ENCODE measurements at regions of chr11 and their contacts with region 1.

Region 1: GRCh38 chr11:17504330-17505107 is 27.9 kb upstream of the ABCC8 start:
- DNase-seq: peak; percentile 36 to 72 (median 48)
- H3K4me3 ChIP-seq: no peak overlapping the region
- H3K27ac ChIP-seq: no peak overlapping the region
- H3K4me1 ChIP-seq: peaks cover 4% of the 10 kb centered on the region
- H3K27me3 ChIP-seq: no peaks in the 10 kb centered on the region
- CTCF ChIP-seq: peak in 2 of 3 donors; percentile 17 to 25
- EP300 ChIP-seq: no peak
- POLR2A ChIP-seq: no peak

Region 2: DNA sequence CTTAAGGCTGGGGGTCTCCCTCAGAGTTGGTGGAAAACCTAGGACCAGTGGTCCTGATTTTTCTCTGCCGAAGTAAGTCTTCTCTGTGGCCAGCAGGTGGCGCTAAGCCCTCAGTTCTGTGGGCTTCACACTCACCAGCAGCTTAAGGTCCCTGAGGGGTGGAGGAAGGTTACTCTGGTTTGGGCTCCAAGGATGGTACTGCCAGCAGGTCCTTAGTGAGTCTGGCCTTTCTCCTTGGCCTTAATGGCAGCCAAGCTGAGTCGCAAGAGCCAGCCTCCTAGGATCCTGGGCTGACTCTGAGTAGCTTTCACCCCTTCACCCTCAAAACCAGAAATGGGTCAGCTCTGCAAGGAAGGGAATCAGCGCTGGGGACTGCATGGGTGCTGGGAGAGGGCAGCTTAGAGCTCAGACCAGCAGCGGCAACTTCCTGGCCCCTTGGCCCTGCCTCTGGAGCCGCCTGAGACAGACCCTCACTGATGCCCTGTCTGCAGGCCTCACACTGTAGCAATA is 120.5 kb before region 1 on chr11:
- intact Hi-C with region 1: loop called in 2 of 4 experiments (anchors 5 to 10 kb)
- DNase-seq: peak; percentile 65 to 83 (median 79)
- H3K4me3 ChIP-seq: no peak overlapping the region
- H3K27ac ChIP-seq: no peak overlapping the region
- H3K4me1 ChIP-seq: peaks cover 3% of the 10 kb centered on the region
- H3K27me3 ChIP-seq: no peaks in the 10 kb centered on the region
- CTCF ChIP-seq: peak; percentile 58 to 75 (median 75)
- EP300 ChIP-seq: no peak
- POLR2A ChIP-seq: no peak

Region 3: DNA sequence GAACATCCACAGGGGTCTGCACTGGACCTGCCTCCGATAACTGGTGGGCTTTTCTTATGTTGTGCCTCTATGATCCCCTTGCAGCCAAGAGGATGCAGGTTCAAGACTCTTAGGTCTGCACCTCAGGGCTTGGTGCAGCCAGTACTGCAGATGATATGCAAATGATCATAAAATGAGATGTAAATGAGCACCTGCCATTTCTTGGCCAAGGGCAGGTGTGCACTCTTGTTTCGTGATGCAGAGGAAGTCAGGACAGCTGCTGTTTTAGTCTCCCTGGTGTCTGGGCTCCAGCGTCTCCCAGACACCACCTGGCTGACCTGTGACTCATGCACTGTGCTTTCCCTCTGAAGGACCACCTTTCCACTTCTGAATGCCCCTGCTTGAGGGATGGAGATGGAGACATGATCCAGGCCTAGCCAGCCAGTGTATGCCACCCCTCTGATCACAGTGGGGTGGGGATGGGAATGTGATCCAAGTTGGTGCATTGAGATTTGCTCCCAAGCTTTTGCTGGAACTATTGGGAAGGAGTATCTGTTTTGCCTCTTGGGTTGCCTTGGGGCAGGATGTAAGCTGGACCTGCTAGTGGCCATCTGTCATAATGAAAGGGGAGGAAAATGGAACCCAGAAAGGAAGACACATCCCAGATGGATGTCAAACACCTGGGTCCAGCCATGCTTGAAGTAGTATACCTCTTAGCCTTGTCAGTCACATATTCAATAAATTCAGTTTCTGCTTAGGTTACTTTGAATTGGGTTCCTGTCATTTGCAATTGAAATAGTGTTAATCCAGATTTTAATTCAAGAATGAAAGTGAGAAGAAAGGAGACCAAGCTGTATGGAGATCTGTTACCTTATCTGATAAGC is 112.8 kb before region 1 on chr11:
- intact Hi-C with region 1: loop called in 2 of 4 experiments (anchors 5 to 10 kb)
- DNase-seq: no peak
- H3K4me3 ChIP-seq: no peak overlapping the region
- H3K27ac ChIP-seq: no peak overlapping the region
- H3K4me1 ChIP-seq: peaks cover 3% of the 10 kb centered on the region
- H3K27me3 ChIP-seq: no peaks in the 10 kb centered on the region
- CTCF ChIP-seq: no peak
- EP300 ChIP-seq: no peak
- POLR2A ChIP-seq: no peak